ENCODE measurements at regions of chr16 and their contacts with region 1.

Region 1: GRCh38 chr16:89490387-89491237 is at the start of gene ANKRD11:
- DNase-seq: peak; percentile 98 to 100
- H3K4me3 ChIP-seq: peak within 1 kb of the TSS; percentile 95
- H3K27ac ChIP-seq: peak within 1 kb of the TSS; percentile 99
- H3K4me1 ChIP-seq: peaks cover 9 to 36% of the 10 kb centered on the region in 2 donors
- H3K27me3 ChIP-seq: no peaks in the 10 kb centered on the region
- CTCF ChIP-seq: peak in 1 of 3 experiments; percentile 8
- total RNA-seq, gene ANKRD11: 124 TPM

Region 2: DNA sequence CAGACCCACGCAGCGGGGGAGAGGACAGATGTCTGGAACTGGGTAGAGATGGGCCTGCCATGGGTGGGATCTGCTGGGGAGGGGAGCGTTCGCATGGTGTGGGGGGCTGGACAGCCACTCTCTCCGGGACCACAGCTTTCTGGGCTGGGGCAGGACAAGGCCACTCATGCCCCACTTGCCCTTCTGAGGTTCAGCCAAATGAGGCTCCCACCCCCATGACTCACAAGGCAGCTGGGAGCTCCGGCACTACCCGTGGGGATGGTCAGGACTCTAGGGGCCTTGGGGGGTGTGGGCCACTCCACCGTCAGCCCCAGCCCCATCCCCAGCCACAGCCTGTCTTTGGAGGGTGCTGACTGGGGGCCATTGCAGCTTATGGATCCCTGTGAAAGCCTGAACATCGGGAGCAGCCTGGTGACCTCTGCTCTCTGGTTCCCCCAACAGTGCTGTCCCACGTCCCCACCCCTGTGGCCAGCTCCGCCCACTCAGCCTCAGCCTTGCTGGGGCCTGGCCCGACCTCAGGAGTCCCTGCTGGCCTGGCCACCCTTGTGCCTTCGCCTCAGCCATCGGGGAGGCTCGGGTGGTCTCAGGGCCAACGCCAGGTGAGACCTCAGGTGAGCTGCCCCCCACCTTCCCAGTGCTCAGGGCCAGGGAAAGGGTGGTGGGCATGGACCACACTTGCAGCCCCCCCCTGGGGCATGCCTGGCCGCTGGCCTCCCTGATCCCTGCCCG is 323.8 kb before region 1 on chr16:
- intact Hi-C with region 1: no loop called
- DNase-seq: no peak
- H3K4me3 ChIP-seq: no peak overlapping the region
- H3K27ac ChIP-seq: no peak overlapping the region
- H3K4me1 ChIP-seq: peaks cover 6 to 8% of the 10 kb centered on the region in 2 donors
- H3K27me3 ChIP-seq: peaks cover 18% of the 10 kb centered on the region
- CTCF ChIP-seq: no peak

Region 3: DNA sequence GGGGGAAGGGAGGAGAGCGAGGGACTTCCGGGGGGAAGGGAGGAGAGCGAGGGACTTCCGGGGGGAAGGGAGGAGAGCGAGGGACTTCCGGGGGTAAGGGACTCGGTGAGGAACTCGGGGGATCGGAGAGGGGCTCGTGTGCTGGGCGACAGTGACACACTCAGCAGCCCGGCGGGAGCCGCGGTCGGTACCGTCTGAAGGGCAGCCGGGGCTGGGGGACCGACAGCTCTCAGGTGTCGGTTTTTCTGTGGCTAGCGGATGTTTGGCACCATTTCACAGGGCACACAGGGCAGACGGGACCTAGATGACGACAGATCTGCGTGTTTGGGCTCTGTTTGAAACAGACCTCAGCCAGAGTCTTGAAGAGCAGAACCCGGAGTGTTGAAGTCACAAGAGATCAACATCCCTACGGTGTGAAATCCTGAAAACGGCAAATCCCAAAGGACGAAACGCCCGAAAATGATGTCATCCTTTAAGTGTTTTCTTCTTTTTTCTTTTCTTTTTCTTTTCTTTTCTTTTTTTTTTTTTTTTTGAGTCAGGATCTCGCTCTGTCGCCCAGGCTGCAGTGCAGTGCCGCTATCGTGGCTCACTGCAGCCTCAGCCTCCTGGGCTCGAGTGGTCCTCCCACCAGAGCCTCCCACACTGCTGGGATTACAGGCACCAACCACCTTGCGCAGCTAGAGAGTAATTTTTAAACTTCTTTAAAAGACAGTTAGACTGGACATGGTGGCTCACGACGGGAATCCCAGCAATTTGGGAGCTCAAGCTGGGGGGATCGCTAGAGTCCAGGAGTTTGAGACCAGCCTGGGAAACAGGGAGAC is 249.2 kb before region 1 on chr16:
- intact Hi-C with region 1: loop called (anchors 1 kb)
- DNase-seq: peak in 1 of 2 donors; percentile 87
- H3K4me3 ChIP-seq: peak overlapping the region; percentile 70 to 79
- H3K27ac ChIP-seq: peak overlapping the region; percentile 95 to 98
- H3K4me1 ChIP-seq: peaks cover 0 to 6% of the 10 kb centered on the region in 2 donors
- H3K27me3 ChIP-seq: no peaks in the 10 kb centered on the region
- CTCF ChIP-seq: no peak

Region 4: GRCh38 chr16:89256651-89257254 is 233.9 kb before region 1 on chr16:
- intact Hi-C with region 1: no loop called
- DNase-seq: peak in 1 of 2 donors; percentile 84
- H3K4me3 ChIP-seq: peak overlapping the region; percentile 40 to 49
- H3K27ac ChIP-seq: no peak overlapping the region
- H3K4me1 ChIP-seq: peaks cover 3 to 5% of the 10 kb centered on the region in 2 donors
- H3K27me3 ChIP-seq: no peaks in the 10 kb centered on the region
- CTCF ChIP-seq: no peak

Region 5: GRCh38 chr16:89325861-89326471 is 164.6 kb before region 1 on chr16:
- intact Hi-C with region 1: loop called (anchors 5 kb)
- DNase-seq: no peak
- H3K4me3 ChIP-seq: peak overlapping the region; percentile 22 to 41
- H3K27ac ChIP-seq: peak overlapping the region; percentile 57 to 68
- H3K4me1 ChIP-seq: peaks cover 13 to 33% of the 10 kb centered on the region in 2 donors
- H3K27me3 ChIP-seq: no peaks in the 10 kb centered on the region
- CTCF ChIP-seq: no peak

Region 6: DNA sequence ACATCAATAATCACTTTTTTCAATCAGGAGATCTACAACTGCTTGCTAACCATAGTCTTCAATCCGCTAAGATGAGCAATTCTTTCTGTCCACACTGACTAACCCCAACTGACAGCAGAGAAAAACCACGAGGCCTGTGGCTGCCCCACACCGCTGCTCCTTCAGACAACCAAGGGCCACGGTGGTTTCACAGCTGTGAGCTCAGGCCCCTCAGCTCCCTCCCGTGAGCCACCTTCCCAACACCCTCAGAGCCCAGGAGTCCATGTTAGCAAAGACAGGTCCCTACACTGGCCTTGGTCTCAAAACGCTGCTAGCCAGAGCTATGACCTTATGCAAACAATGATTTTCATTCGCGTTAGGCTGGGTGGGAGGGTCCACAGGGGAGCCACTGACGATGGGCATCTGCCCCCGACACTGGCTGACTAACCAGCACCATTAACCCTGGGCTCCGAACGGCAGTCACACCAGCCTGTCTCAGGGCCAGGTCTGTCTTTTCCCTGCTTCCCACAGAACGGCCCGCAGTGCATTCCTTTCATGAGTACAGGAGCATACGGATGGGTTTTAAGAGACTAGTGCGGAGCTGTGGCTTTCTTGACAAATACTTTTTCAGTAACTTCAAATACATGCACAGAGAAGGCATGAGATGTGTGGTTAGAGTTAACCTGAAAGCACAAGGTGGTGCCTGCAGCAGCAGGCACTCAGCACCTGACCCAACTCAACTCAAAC is 67.5 kb before region 1 on chr16:
- intact Hi-C with region 1: loop called (anchors 2 kb)
- DNase-seq: no peak
- H3K4me3 ChIP-seq: peak overlapping the region in 1 of 2 donors; percentile 35
- H3K27ac ChIP-seq: peak overlapping the region; percentile 71 to 86
- H3K4me1 ChIP-seq: peaks cover 17 to 30% of the 10 kb centered on the region in 2 donors
- H3K27me3 ChIP-seq: no peaks in the 10 kb centered on the region
- CTCF ChIP-seq: no peak

Region 7: GRCh38 chr16:89507834-89508590 is 17.4 kb after region 1 on chr16 and contains the start of gene SPG7:
- intact Hi-C with region 1: loop called (anchors 1 kb)
- DNase-seq: peak; percentile 19 to 87
- H3K4me3 ChIP-seq: peak within 1 kb of the TSS; percentile 66 to 97
- H3K27ac ChIP-seq: peak within 1 kb of the TSS; percentile 94 to 96
- H3K4me1 ChIP-seq: peaks cover 8 to 24% of the 10 kb centered on the region in 2 donors
- H3K27me3 ChIP-seq: no peaks in the 10 kb centered on the region
- CTCF ChIP-seq: no peak
- total RNA-seq, gene SPG7: 108 TPM

Region 8: DNA sequence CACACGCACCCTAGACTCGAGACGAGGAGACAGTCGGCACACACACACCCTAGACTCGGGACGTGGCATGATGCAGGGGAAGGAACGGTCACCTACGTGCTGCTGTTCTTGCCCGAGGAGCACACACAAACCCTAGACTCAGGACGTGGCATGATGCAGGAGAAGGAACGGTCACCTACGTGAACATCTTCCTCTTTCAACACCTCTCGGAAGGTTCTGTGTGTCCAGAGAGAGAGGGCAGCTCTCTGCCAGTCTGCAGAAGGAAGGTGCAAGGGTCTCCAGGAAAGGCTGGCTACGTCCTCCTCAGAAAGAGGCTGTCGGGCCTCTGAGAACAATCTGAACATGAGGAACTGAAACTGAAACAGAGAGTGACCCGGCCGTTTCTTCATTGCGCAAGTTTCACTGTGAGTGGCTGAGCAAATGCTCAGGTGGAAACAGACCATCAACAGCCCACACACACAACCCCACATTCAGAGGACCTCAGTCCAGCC is 274.1 kb after region 1 on chr16:
- intact Hi-C with region 1: no loop called
- DNase-seq: peak; percentile 41 to 77
- H3K4me3 ChIP-seq: peak overlapping the region in 1 of 2 donors; percentile 38
- H3K27ac ChIP-seq: no peak overlapping the region
- H3K4me1 ChIP-seq: no peaks in the 10 kb centered on the region
- H3K27me3 ChIP-seq: no peaks in the 10 kb centered on the region
- CTCF ChIP-seq: no peak

Region 9: GRCh38 chr16:89873972-89874689 is 383.5 kb after region 1 on chr16:
- intact Hi-C with region 1: loop called (anchors 5 kb)
- DNase-seq: peak; percentile 74 to 97
- H3K4me3 ChIP-seq: peak overlapping the region; percentile 70 to 87
- H3K27ac ChIP-seq: peak overlapping the region; percentile 98 to 100
- H3K4me1 ChIP-seq: peaks cover 0 to 9% of the 10 kb centered on the region in 2 donors
- H3K27me3 ChIP-seq: no peaks in the 10 kb centered on the region
- CTCF ChIP-seq: no peak